Activated CD4-positive, alpha-beta T cell treated with anti-CD3 and anti-CD28 coated beads, Interleukin-2, amount 10 ng/mL, durations not matched to agents 24 days and 14 days (primary cell): ENCODE measurements at regions of chr7 and their contacts with region 1.

Region 1: DNA sequence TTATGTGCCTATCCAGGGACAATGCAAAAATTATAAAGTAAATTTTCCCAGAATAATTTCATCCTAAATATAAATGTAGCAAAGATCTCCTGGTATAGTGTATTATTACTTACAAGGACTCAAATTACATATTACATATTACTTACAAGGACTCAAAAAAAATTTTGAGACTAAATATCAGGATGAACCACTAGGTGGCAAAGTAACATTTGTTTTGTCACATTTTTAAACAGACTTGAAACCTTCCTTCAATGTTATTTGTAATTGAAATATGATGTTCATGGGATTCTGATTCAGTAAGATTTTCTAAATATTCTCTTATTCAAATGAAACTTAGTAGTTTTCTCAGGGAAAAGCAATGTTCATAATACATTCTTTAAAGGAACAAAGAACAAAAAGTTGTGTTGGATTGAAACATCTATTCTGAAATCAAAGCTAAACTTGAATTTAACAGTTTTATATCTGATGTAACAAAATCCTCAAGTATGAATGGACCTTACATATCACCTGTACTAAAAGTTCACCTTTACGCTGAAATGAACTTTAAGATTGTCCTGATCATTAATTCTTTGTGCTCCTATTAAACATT is 74.3 kb upstream of the GNAI1 start:
- DNase-seq: no peak
- H3K4me3 Mint-ChIP-seq: no peak overlapping the region
- H3K27ac Mint-ChIP-seq: no peak overlapping the region
- H3K4me1 Mint-ChIP-seq: no peaks in the 10 kb centered on the region
- H3K27me3 Mint-ChIP-seq: no peaks in the 10 kb centered on the region

Region 2: GRCh38 chr7:80307227-80307856 is 247.0 kb after region 1 on chr7:
- intact Hi-C with region 1: no loop called
- DNase-seq: no peak
- H3K4me3 Mint-ChIP-seq: no peak overlapping the region
- H3K27ac Mint-ChIP-seq: no peak overlapping the region
- H3K4me1 Mint-ChIP-seq: peaks cover 7% of the 10 kb centered on the region
- H3K27me3 Mint-ChIP-seq: no peaks in the 10 kb centered on the region

Region 3: GRCh38 chr7:80392229-80393169 is 332.2 kb after region 1 on chr7:
- intact Hi-C with region 1: loop called (anchors 1 kb)
- DNase-seq: no peak
- H3K4me3 Mint-ChIP-seq: no peak overlapping the region
- H3K27ac Mint-ChIP-seq: no peak overlapping the region
- H3K4me1 Mint-ChIP-seq: no peaks in the 10 kb centered on the region
- H3K27me3 Mint-ChIP-seq: no peaks in the 10 kb centered on the region

Region 4: DNA sequence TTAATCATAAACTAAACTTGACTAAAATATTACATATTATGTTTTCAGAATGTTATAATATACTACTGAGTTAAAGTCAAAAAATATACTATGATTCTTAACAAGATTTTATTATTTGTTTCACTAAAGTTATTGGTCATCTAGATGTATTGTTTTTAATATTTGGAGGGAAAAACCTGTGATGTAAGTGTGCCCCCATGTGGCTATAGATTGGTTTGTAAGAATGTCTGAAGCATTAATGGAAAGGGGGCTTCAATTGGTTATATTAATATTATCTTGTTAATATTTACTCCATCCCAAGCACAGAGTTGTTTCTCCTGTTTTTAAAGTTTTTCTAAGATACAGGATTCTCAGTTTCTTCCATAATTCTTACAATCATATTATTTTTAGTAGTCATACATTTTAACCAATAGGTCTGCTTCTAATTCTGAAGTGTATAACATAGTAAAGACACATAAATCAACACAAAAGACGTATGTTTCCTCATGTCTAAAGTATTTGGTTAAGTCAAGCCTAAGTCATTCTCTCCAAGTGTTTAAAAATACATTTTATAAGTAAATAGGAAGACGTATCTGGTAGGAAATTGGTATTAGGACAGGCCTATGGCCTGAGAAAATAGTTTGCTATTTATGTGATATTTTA is 393.5 kb after region 1 on chr7:
- intact Hi-C with region 1: loop called (anchors 1 kb)
- DNase-seq: no peak
- H3K4me3 Mint-ChIP-seq: no peak overlapping the region
- H3K27ac Mint-ChIP-seq: no peak overlapping the region
- H3K4me1 Mint-ChIP-seq: no peaks in the 10 kb centered on the region
- H3K27me3 Mint-ChIP-seq: no peaks in the 10 kb centered on the region